ENCODE measurements at regions of chr1 and their contacts with region 1.

Region 1: DNA sequence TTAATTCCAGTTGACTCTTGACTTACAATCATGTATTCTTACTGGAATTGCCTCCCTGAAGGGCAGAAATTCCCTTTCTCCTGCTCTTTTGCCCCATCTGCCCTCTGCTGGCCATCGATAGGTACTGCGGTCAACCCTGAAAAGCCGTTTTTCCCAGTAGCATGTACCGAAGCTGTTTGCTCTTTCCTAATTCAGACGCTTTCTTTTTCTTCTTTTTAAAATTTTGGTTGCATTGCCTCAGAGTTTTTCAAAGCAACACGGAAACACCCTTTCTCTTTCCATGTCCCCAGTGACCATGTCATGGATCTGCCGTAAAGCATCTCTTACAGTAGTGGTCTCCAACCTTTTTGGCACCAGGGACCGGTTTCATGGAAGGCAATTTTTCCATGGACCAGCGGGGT is 164.2 kb upstream of the C1orf21 start:
- DNase-seq: peak; percentile 77
- H3K4me3 Mint-ChIP-seq: peak overlapping the region; percentile 12
- H3K27ac Mint-ChIP-seq: no peak overlapping the region
- H3K4me1 Mint-ChIP-seq: peaks cover 5% of the 10 kb centered on the region
- H3K27me3 Mint-ChIP-seq: peaks cover 15% of the 10 kb centered on the region
- CTCF ChIP-seq: peak; percentile 93

Region 2: DNA sequence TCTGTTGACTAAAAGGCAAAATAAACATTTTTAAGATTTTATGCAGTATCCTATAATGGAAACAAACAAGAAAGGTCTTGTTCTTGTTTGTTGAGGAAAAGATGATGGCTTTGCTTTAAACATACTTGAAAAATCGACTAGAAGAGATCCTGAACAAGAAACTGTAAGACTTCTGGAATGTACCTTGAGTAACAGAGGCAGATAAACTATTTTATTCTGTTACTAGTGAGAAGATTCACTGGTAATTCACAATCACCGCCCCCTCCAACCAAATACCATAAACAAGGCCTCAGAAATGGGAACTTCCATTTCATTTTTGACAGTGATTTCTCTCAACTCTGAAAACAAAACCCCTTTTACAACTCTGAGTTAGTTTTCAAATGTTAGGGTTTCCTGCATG is 153.0 kb before region 1 on chr1:
- CTCF ChIA-PET with region 1: interaction called, 122 read pairs
- POLR2A ChIA-PET with region 1: interaction called, 3 read pairs
- intact Hi-C with region 1: no loop called
- DNase-seq: no peak
- H3K4me3 Mint-ChIP-seq: no peak overlapping the region
- H3K27ac Mint-ChIP-seq: no peak overlapping the region
- H3K4me1 Mint-ChIP-seq: no peaks in the 10 kb centered on the region
- H3K27me3 Mint-ChIP-seq: no peaks in the 10 kb centered on the region
- CTCF ChIP-seq: no peak

Region 3: GRCh38 chr1:184075055-184076029 is 147.3 kb before region 1 on chr1:
- CTCF ChIA-PET with region 1: interaction called, 122 read pairs
- POLR2A ChIA-PET with region 1: interaction called, 3 read pairs
- intact Hi-C with region 1: loop called (anchors 1 kb)
- DNase-seq: peak; percentile 72
- H3K4me3 Mint-ChIP-seq: no peak overlapping the region
- H3K27ac Mint-ChIP-seq: no peak overlapping the region
- H3K4me1 Mint-ChIP-seq: no peaks in the 10 kb centered on the region
- H3K27me3 Mint-ChIP-seq: no peaks in the 10 kb centered on the region
- CTCF ChIP-seq: peak; percentile 90

Region 4: DNA sequence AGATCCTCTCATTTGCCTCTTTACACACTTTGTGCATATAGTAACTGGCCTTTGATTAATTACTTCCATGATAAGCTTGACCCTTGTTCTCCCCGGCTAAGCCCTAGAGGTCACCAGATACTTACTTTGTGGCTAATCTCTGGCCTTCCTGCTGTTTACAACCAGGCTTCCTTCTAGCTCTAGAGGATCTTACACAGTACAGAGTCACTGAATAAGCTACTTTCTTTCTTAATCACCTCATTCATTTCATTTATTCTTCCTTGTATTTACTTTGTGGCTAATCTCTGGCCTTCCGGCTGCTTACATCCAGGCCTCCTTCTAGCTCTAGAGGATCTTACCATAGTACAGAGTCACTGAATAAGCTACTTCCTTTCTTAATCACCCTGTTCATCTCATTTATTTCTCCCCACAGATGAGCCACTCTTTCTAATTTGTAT is 19.9 kb after region 1 on chr1:
- CTCF ChIA-PET with region 1: interaction called, 31 read pairs
- POLR2A ChIA-PET with region 1: no interaction called
- intact Hi-C with region 1: no loop called
- DNase-seq: peak; percentile 40
- H3K4me3 Mint-ChIP-seq: no peak overlapping the region
- H3K27ac Mint-ChIP-seq: peak overlapping the region; percentile 1
- H3K4me1 Mint-ChIP-seq: no peaks in the 10 kb centered on the region
- H3K27me3 Mint-ChIP-seq: no peaks in the 10 kb centered on the region
- CTCF ChIP-seq: no peak

Region 5: GRCh38 chr1:184247671-184248070 is 25.0 kb after region 1 on chr1:
- CTCF ChIA-PET with region 1: interaction called, 19 read pairs
- POLR2A ChIA-PET with region 1: no interaction called
- intact Hi-C with region 1: no loop called
- DNase-seq: no peak
- H3K4me3 Mint-ChIP-seq: no peak overlapping the region
- H3K27ac Mint-ChIP-seq: no peak overlapping the region
- H3K4me1 Mint-ChIP-seq: no peaks in the 10 kb centered on the region
- H3K27me3 Mint-ChIP-seq: no peaks in the 10 kb centered on the region
- CTCF ChIP-seq: no peak

Region 6: GRCh38 chr1:184563308-184563707 is 340.7 kb after region 1 on chr1:
- CTCF ChIA-PET with region 1: interaction called, 4 read pairs
- POLR2A ChIA-PET with region 1: no interaction called
- intact Hi-C with region 1: loop called (anchors 2 kb)
- DNase-seq: peak; percentile 56
- H3K4me3 Mint-ChIP-seq: no peak overlapping the region
- H3K27ac Mint-ChIP-seq: no peak overlapping the region
- H3K4me1 Mint-ChIP-seq: peaks cover 32% of the 10 kb centered on the region
- H3K27me3 Mint-ChIP-seq: no peaks in the 10 kb centered on the region
- CTCF ChIP-seq: peak; percentile 57